ENCODE measurements at regions of chr16 and their contacts with region 1.

Region 1: GRCh38 chr16:85935974-85936760 is 37.2 kb downstream of the IRF8 start:
- DNase-seq: peak; percentile 68 to 83 (median 77)
- H3K4me3 ChIP-seq: peak overlapping the region; percentile 28 to 49
- H3K4me3 Mint-ChIP-seq: peak overlapping the region; percentile 69 to 91 (median 76)
- H3K27ac ChIP-seq: peak overlapping the region; percentile 55
- H3K27ac Mint-ChIP-seq: peak overlapping the region; percentile 85 to 98 (median 95)
- H3K4me1 ChIP-seq: peaks cover 34% of the 10 kb centered on the region
- H3K4me1 Mint-ChIP-seq: peaks cover 28 to 52% (median 37%) of the 10 kb centered on the region in 4 donors
- H3K27me3 ChIP-seq: no peaks in the 10 kb centered on the region
- H3K27me3 Mint-ChIP-seq: no peaks in the 10 kb centered on the region

Region 2: DNA sequence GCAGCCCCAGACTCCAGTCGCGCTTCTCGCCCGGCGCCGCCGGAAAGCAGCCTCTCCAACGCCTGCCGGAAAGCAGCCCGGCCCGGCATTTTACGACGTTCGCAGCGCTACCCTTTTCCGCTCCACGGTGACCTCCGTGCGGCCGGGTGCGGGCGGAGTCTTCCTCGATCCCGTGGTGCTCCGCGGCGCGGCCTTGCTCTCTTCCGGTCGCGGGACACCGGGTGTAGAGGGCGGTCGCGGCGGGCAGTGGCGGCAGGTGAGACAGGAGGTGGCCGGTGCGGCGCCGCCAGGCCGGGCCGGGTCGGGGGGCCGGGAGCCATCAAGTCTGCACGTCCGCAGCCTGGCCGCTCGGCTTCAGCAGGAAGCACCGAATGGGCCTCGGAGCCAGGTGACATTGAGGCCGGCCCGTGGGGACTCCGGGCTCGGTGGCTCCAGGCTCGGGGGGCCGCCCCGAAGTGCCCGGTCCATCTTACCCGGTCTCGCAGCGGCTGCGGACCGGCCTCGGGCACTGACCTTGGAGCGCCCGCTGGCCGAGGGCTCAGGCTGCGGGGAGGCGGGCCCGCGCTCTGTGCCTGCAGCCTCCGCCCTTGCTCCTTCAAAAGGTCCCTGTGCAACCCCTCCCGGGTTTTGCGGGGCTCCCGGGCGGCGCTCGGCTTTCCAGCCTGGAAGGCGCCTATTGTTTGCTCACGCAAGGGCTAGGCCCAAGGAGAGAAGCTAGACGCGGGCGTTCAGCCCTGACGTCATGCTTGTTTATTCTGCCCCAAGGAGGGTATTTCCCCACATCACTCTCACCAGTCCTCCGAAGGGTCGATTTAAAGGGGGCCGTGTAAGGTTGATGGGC is 136.4 kb before region 1 on chr16 and contains the starts of genes COX4I1 and EMC8:
- CTCF ChIA-PET with region 1: no interaction called
- POLR2A ChIA-PET with region 1: no interaction called
- intact Hi-C with region 1: loop called (anchors 1 kb)
- DNase-seq: peak; percentile 90 to 92 (median 91)
- H3K4me3 ChIP-seq: peak within 1 kb of the TSS; percentile 58 to 67
- H3K4me3 Mint-ChIP-seq: peak within 1 kb of the TSS; percentile 87 to 96 (median 90)
- H3K27ac ChIP-seq: peak within 1 kb of the TSS; percentile 97
- H3K27ac Mint-ChIP-seq: peak within 1 kb of the TSS; percentile 94 to 97 (median 97)
- H3K4me1 ChIP-seq: peaks cover 29% of the 10 kb centered on the region
- H3K4me1 Mint-ChIP-seq: peaks cover 39 to 66% (median 53%) of the 10 kb centered on the region in 4 donors
- H3K27me3 ChIP-seq: no peaks in the 10 kb centered on the region
- H3K27me3 Mint-ChIP-seq: no peaks in the 10 kb centered on the region
- total RNA-seq, gene COX4I1: 490 to 521 TPM
- total RNA-seq, gene EMC8: 22.7 to 22.8 TPM

Region 3: DNA sequence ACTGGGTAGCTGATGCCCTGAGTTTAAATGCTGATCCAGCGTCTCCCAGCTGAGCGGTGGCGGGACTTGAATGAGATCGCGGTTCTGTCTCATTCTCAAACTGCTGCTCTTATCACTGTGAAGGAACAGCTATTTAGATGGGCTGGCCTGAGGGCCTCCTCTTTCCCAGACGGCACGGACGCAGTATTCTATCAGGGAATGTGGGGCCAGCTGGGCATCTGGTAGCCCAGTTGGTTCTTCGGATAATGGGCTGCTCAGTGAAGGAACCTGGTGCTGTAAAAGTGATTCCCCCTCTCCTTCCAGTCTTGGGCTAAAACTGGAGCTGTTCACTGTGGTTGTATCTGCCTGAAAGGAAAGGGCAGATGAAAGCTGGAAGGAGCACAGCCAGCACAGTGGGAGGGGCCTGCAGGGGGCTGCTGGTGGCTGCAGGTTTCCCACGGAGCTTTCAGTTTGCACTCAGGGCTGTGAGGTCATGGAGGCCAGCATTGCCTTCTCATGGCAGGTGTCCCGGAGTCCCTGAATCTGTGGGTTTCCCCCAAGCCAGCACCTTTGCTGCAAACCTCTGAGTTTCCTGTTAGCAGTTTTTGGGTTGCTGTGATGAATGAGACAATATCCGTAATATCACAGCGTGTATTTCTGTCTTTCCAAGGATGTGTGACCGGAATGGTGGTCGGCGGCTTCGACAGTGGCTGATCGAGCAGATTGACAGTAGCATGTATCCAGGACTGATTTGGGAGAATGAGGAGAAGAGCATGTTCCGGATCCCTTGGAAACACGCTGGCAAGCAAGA is 33.6 kb before region 1 on chr16:
- CTCF ChIA-PET with region 1: interaction called, 4 read pairs
- POLR2A ChIA-PET with region 1: interaction called, 4 read pairs
- intact Hi-C with region 1: loop called (anchors 2 kb)
- DNase-seq: peak; percentile 42 to 83 (median 55)
- H3K4me3 ChIP-seq: peak overlapping the region; percentile 23 to 26
- H3K4me3 Mint-ChIP-seq: peak overlapping the region; percentile 84 to 95 (median 90)
- H3K27ac ChIP-seq: no peak overlapping the region
- H3K27ac Mint-ChIP-seq: peak overlapping the region; percentile 53 to 96 (median 77)
- H3K4me1 ChIP-seq: peaks cover 37% of the 10 kb centered on the region
- H3K4me1 Mint-ChIP-seq: peaks cover 23 to 44% (median 31%) of the 10 kb centered on the region in 4 donors
- H3K27me3 ChIP-seq: peaks cover 12% of the 10 kb centered on the region
- H3K27me3 Mint-ChIP-seq: peaks cover 23 to 27% of the 10 kb centered on the region in 2 donors

Region 4: DNA sequence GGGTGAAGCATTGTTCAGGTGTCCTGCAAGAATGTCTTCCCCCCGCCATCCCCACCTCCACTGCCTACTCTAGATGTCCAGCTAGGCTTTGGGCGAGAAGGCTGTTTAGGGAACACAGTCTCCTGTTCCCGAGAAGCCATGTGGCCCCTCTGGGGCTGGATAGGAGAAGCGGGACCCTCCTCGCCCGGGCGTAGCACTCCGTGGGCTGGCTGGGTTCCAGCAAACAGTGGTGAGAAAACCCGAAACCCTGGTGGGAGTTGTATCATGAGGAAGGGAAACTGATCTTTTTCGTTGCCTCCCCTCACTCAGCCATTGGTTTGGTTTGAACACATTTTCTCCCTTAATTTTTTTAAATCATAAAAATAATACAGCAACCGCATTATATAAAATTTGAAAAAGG is 19.4 kb after region 1 on chr16:
- CTCF ChIA-PET with region 1: no interaction called
- POLR2A ChIA-PET with region 1: no interaction called
- intact Hi-C with region 1: no loop called
- DNase-seq: no peak
- H3K4me3 ChIP-seq: no peak overlapping the region
- H3K4me3 Mint-ChIP-seq: no peak overlapping the region
- H3K27ac ChIP-seq: no peak overlapping the region
- H3K27ac Mint-ChIP-seq: peak overlapping the region in 1 of 7 donors; percentile 73
- H3K4me1 ChIP-seq: no peaks in the 10 kb centered on the region
- H3K4me1 Mint-ChIP-seq: peaks cover 0 to 7% (median 0%) of the 10 kb centered on the region in 4 donors
- H3K27me3 ChIP-seq: no peaks in the 10 kb centered on the region
- H3K27me3 Mint-ChIP-seq: peaks cover 0 to 3% of the 10 kb centered on the region in 2 donors

Region 5: DNA sequence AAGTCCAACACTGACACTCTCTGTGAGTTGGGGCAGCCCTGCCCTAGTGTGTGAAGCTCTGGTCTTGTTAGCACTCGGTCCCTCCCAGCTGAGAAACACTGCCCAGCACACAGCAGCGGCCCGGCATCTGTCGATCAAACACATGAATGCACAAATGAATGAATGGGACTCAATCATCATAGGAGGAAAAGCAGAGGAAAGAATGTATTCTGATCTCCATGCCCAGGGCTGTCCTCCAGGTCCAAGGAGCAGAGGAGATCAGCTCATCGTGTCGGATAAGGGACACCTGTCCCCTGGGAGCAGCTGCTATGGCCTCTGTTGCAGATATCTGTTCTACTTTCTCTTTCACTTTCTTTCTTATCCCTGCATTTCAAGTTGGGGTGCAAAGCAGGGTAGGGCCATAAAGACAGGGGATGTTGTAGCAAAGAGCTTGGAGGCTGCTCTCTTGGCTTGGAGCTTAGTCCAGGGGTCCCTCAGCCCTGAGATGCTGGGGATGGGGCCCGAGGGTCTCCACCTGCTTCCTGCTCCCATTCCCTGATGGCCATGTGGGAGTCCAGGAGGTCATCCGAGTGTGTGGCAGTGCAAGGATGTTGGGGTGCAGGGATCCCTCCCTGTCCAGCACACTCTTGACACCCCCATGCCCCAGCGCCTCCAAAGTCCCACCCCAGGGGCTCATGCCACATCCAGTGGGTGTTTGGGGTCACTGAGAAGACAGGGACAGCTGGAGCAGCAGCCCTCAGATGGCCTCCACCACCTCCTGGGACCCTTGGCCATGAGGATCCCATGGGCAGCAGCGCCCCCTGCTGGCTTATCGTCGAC is 51.0 kb after region 1 on chr16:
- CTCF ChIA-PET with region 1: interaction called, 20 read pairs
- POLR2A ChIA-PET with region 1: no interaction called
- intact Hi-C with region 1: no loop called
- DNase-seq: peak in 2 of 5 donors; percentile 16 to 28
- H3K4me3 ChIP-seq: no peak overlapping the region
- H3K4me3 Mint-ChIP-seq: peak overlapping the region in 2 of 8 donors; percentile 12 to 16
- H3K27ac ChIP-seq: no peak overlapping the region
- H3K27ac Mint-ChIP-seq: no peak overlapping the region
- H3K4me1 ChIP-seq: peaks cover 6% of the 10 kb centered on the region
- H3K4me1 Mint-ChIP-seq: peaks cover 7 to 40% (median 21%) of the 10 kb centered on the region in 4 donors
- H3K27me3 ChIP-seq: peaks cover 5% of the 10 kb centered on the region
- H3K27me3 Mint-ChIP-seq: peaks cover 17 to 20% of the 10 kb centered on the region in 2 donors